Activated CD8-positive, alpha-beta T cell treated with anti-CD3 and anti-CD28 coated beads, Interleukin-2, amount 10 ng/mL, durations not matched to agents 7 days and 5 days (primary cell): ENCODE measurements at regions of chr6 and their contacts with region 1.

Region 1: GRCh38 chr6:130381459-130382380 is 15.9 kb downstream of the TMEM200A start:
- DNase-seq: peak; percentile 75
- ATAC-seq: peak; percentile 99
- H3K4me3 Mint-ChIP-seq: peak overlapping the region; percentile 0
- H3K27ac Mint-ChIP-seq: peak overlapping the region; percentile 67
- H3K4me1 Mint-ChIP-seq: peaks cover 27% of the 10 kb centered on the region
- H3K27me3 Mint-ChIP-seq: peaks cover 7% of the 10 kb centered on the region

Region 2: DNA sequence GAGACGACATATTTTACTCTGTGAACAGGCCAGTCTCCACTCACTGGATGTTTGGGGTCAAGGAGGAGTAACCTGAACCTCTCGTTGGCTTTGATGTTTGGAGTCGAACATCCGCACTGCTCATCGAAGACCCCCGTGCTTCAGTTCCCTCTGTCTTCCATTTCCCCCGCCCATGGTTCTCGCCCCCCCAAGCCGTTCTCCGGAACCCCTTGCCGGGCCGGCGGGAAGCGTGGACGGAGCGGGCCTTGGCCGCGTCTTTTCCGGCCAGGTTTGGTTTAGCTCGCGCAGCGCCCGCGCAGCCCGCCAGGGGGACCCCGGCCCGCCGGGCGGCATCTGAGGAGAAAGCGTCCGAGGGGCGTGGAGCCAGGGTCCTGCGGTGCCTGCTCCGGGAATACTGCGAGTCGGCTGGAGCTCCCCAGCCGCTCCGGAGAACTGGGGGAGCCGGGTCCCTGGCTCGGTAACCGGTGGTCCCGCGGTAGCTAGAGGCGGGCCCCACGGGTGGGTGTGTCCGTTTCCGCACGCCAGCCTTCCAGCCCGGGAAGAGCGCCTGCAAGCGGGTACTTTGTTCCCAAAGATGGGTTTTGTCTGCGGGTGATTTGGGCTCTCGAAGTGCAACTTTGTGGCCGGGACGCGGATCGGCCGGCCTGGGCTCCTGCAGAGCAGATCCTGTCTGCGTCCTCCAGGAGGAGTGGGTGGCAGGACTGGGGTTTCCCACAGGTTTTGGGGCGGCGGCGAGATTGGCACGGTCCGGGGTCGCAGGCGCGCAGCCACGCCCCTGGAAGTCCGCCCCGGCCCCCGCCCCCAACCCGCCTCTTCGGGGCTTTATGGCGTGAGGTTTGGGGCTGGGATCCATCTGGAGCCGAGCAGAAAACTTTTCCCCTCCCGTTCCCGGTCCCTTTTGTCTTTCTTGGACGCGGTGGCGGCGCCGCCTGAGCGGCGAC is 16.3 kb before region 1 on chr6 and contains the start of gene TMEM200A:
- CTCF ChIA-PET with region 1: interaction called, 25 read pairs
- POLR2A ChIA-PET with region 1: no interaction called
- DNase-seq: peak; percentile 51
- ATAC-seq: peak; percentile 66
- H3K4me3 Mint-ChIP-seq: peak within 1 kb of the TSS; percentile 71
- H3K27ac Mint-ChIP-seq: no peak within 1 kb of the TSS
- H3K4me1 Mint-ChIP-seq: peaks cover 18% of the 10 kb centered on the region
- H3K27me3 Mint-ChIP-seq: peaks cover 35% of the 10 kb centered on the region
- total RNA-seq, gene TMEM200A: 2.6 to 2.7 TPM

Region 3: GRCh38 chr6:130396722-130397121 is 15.0 kb after region 1 on chr6:
- CTCF ChIA-PET with region 1: interaction called, 22 read pairs
- POLR2A ChIA-PET with region 1: no interaction called
- DNase-seq: no peak
- ATAC-seq: peak; percentile 67
- H3K4me3 Mint-ChIP-seq: peak overlapping the region; percentile 48
- H3K27ac Mint-ChIP-seq: peak overlapping the region; percentile 55
- H3K4me1 Mint-ChIP-seq: peaks cover 8% of the 10 kb centered on the region
- H3K27me3 Mint-ChIP-seq: no peaks in the 10 kb centered on the region

Region 4: GRCh38 chr6:130708338-130708737 is 326.6 kb after region 1 on chr6:
- CTCF ChIA-PET with region 1: no interaction called
- POLR2A ChIA-PET with region 1: no interaction called
- DNase-seq: no peak
- ATAC-seq: no peak
- H3K4me3 Mint-ChIP-seq: no peak overlapping the region
- H3K27ac Mint-ChIP-seq: no peak overlapping the region
- H3K4me1 Mint-ChIP-seq: peaks cover 14% of the 10 kb centered on the region
- H3K27me3 Mint-ChIP-seq: no peaks in the 10 kb centered on the region